ENCODE measurements at regions of chr4 and their contacts with region 1.

Region 1: GRCh38 chr4:498328-498904 is 540 bp downstream of the ZNF721 start:
- DNase-seq: no peak
- H3K4me3 ChIP-seq: peak overlapping the region; percentile 79 to 94 (median 86)
- H3K27ac ChIP-seq: peak overlapping the region; percentile 83 to 90 (median 88)
- H3K4me1 ChIP-seq: peaks cover 0 to 40% (median 23%) of the 10 kb centered on the region in 4 donors
- H3K27me3 ChIP-seq: no peaks in the 10 kb centered on the region
- CTCF ChIP-seq: no peak
- EP300 ChIP-seq: no peak
- POLR2A ChIP-seq: no peak

Region 2: DNA sequence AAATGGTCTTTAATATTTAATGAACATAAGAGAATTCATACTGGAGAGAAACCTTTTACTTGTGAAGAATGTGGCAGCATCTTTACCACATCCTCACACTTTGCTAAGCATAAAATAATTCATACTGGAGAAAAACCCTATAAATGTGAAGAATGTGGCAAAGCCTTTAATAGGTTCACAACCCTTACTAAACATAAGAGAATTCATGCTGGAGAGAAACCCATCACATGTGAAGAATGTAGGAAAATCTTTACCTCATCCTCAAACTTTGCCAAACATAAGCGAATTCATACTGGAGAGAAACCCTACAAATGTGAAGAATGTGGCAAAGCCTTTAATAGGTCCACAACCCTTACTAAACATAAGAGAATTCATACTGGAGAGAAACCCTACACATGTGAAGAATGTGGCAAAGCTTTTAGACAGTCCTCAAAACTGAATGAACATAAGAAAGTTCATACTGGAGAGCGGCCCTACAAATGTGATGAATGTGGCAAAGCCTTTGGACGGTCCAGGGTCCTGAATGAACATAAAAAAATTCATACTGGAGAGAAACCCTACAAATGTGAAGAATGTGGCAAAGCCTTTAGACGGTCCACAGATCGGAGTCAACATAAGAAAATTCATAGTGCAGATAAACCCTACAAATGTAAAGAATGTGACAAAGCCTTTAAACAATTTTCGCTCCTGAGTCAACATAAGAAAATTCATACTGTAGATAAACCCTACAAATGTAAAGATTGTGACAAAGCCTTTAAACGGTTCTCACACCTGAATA is 125.2 kb before region 1 on chr4:
- intact Hi-C with region 1: no loop called
- DNase-seq: no peak
- H3K4me3 ChIP-seq: no peak overlapping the region
- H3K27ac ChIP-seq: no peak overlapping the region
- H3K4me1 ChIP-seq: no peaks in the 10 kb centered on the region
- H3K27me3 ChIP-seq: no peaks in the 10 kb centered on the region
- CTCF ChIP-seq: no peak
- EP300 ChIP-seq: no peak
- POLR2A ChIP-seq: no peak

Region 3: DNA sequence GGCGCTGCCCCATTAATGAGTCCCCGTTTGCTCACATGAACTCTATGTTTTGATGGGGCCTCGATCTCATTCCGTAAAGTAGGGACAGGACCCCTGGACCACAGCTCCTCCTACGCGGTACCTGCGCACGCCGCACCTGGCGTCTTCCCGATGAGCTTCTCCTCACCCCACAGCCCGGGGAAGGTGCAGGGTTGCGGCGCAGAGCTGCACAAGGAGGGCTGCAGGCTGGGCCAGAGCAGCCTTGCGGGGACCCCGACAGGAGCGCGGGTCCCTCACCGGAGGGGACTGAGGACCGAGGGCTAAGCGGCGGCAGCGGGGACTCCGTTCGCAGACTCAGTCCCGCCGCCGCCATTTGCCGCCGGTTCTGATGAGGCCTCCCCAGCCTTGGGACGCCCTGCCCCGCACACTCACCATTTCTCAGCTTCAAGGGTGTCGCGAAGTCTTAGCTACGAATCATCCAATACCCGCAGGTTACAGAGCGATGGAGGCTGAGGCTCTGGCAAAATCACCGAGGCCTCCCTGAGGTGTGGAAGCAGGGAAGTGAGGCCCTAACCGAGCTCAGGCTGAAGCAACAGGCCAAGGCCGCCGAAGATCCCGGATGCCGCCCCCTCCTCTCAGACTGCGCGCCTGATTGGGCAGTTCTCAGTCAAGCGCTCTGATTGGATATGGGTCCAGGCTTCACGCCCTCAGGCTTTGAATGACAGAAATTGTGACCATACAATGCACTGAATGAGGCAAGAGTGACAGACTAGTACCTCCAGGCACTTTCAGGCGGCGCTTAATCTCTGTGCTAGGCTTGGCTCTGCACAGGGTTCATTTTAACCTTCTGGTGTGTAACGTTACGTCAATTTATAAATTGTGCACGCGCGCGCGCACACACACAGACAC is 24.6 kb before region 1 on chr4:
- intact Hi-C with region 1: loop called (anchors 2 kb)
- DNase-seq: peak; percentile 98
- H3K4me3 ChIP-seq: peak overlapping the region; percentile 77 to 99 (median 92)
- H3K27ac ChIP-seq: peak overlapping the region; percentile 86 to 92 (median 90)
- H3K4me1 ChIP-seq: peaks cover 0 to 25% (median 17%) of the 10 kb centered on the region in 4 donors
- H3K27me3 ChIP-seq: no peaks in the 10 kb centered on the region
- CTCF ChIP-seq: no peak
- EP300 ChIP-seq: no peak
- POLR2A ChIP-seq: peak; percentile 56 to 63

Measured in sigmoid colon (tissue), 7 donors.